RWPE1 (cell line): ENCODE measurements at regions of chr20 and their contacts with region 1.

Region 1: DNA sequence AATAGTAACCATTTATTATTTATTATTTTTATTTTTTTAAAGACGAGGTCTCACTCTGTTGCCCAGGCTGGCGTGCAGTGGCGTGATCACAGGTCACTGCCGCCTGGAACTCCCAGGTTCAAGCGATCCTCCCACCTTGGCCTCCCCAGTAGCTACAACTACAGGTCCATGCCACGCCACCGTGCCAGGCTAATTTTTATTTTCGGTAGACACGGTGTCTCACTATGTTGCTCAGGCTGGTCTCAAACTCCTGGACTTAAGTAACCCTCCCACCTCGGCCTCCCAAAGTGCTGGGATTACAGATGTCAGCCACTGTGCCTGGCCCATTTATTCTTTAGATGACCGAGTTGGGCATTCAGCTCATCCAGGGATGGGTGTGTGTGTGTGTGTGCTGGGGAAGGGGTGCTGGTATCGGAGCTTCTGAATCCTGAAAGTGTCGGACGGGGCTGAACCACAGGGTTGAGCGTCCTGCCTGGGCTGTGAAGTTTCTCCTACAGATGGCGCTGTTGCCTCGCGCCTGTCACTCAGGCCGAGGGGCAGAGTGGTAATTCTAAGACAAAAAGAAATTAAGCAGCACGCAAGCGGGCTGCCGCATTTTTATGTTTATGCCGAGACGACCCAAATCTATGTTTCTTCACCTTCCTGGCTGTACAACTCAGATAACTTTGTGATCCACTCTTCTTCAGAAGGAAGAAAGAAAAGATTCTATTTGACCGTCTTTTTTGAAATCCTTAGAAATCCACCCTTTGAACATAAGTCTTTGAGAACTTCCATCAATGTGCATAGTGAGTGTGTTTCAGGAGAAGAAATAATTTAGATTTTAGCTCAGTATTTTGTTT is 252.8 kb downstream of the CDH26 start:
- DNase-seq: peak; percentile 90
- H3K27ac ChIP-seq: no peak overlapping the region
- CTCF ChIP-seq: peak; percentile 100

Region 2: GRCh38 chr20:60057123-60057801 is 153.7 kb before region 1 on chr20:
- CTCF ChIA-PET with region 1: interaction called, 30 read pairs
- POLR2A ChIA-PET with region 1: no interaction called
- DNase-seq: peak; percentile 93
- H3K27ac ChIP-seq: peak overlapping the region; percentile 66; the same call in 1 of the 2 replicates
- CTCF ChIP-seq: peak; percentile 99

Region 3: DNA sequence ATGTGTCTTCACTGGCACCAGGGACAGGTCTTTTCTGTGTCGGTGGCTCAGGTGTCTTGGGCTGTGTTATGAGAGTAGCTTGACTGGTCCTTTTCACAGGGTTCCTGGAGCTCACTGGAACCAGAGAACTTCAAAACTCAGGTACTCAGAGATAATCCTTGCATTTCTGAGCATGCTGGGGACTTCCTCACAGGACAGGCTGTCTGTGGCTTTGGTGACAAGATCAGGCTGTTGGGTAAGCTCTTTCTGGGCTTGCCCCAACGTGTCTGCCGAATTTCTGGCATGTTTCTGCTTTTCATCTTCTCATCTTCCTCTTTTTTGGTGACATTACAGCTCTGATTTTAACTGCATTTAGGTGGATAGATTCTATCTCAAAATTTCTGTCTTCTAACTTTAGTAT is 17.3 kb after region 1 on chr20:
- CTCF ChIA-PET with region 1: interaction called, 10 read pairs
- POLR2A ChIA-PET with region 1: no interaction called
- DNase-seq: no peak
- H3K27ac ChIP-seq: no peak overlapping the region
- CTCF ChIP-seq: no peak

Region 4: GRCh38 chr20:60262967-60263603 is 52.1 kb after region 1 on chr20:
- CTCF ChIA-PET with region 1: interaction called, 80 read pairs
- POLR2A ChIA-PET with region 1: no interaction called
- DNase-seq: peak; percentile 82
- H3K27ac ChIP-seq: no peak overlapping the region
- CTCF ChIP-seq: peak; percentile 87

Region 5: DNA sequence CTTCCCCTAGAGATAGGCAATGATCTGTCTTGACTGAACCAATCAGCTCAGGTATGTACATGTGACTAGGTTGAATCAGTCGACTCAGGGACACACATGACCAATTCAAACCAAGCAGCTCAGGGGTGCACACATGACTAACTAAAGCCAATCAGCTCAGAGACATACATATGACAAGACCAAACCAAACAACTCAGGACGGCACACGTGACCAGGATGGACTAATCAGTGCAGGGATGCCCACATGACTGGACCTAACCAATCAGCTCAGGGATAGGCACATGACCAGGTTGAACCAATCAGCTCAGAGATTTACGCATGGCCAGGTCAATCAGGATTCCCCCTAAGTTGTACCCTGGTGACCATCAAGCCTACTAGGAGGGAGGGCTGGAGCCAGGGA is 57.5 kb after region 1 on chr20:
- CTCF ChIA-PET with region 1: interaction called, 80 read pairs
- POLR2A ChIA-PET with region 1: no interaction called
- DNase-seq: peak; percentile 38
- H3K27ac ChIP-seq: no peak overlapping the region
- CTCF ChIP-seq: no peak